ENCODE measurements at regions of chr1 and their contacts with region 1.

Region 1: DNA sequence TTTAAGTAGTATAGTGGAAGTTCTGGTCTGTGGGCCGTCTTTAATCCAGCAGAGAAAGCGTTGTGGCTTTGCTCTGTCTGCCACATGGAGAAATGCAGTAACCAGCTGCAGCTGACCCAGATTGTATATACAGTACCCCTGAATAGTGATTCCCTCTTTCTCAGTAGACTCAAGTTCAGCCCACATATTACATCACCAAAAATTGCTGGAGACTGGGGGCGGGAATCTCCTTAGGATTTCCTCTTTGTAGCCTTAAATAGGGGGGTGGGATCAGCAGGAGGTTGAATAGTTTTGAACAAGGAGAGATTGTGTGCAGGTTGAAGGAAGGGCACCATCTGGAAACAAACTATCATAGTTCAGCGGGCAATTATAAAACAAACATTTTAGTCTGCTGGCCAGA is at the start of gene ANGPTL1:
- DNase-seq: peak in 1 of 2 donors; percentile 12
- ATAC-seq: peak in 6 of 8 donors; percentile 34 to 62 (median 48)
- H3K4me3 ChIP-seq: peak within 1 kb of the TSS in 9 of 10 donors; percentile 12 to 50 (median 42)
- H3K27ac ChIP-seq: peak within 1 kb of the TSS in 7 of 10 donors; percentile 6 to 62 (median 35)
- H3K4me1 ChIP-seq: peaks cover 0 to 41% (median 16%) of the 10 kb centered on the region in 9 donors
- H3K27me3 ChIP-seq: no peaks in the 10 kb centered on the region
- CTCF ChIP-seq: no peak
- total RNA-seq, gene ANGPTL1: 6.9 to 35.2 (median 13.5) TPM

Region 2: GRCh38 chr1:178566187-178566586 is 304.8 kb before region 1 on chr1:
- intact Hi-C with region 1: no loop called
- DNase-seq: no peak
- ATAC-seq: no peak
- H3K4me3 ChIP-seq: no peak overlapping the region
- H3K27ac ChIP-seq: no peak overlapping the region
- H3K4me1 ChIP-seq: peaks cover 0 to 20% (median 0%) of the 10 kb centered on the region in 9 donors
- H3K27me3 ChIP-seq: no peaks in the 10 kb centered on the region
- CTCF ChIP-seq: no peak

Region 3: GRCh38 chr1:178931858-178932551 is 61.1 kb after region 1 on chr1:
- intact Hi-C with region 1: loop called in 5 of 10 experiments (anchors 5 to 10 kb)
- DNase-seq: peak; percentile 66 to 81
- ATAC-seq: peak; percentile 62 to 94 (median 84)
- H3K4me3 ChIP-seq: no peak overlapping the region
- H3K27ac ChIP-seq: peak overlapping the region; percentile 60 to 88 (median 78)
- H3K4me1 ChIP-seq: peaks cover 8 to 55% (median 41%) of the 10 kb centered on the region in 9 donors
- H3K27me3 ChIP-seq: no peaks in the 10 kb centered on the region
- CTCF ChIP-seq: no peak

Region 4: DNA sequence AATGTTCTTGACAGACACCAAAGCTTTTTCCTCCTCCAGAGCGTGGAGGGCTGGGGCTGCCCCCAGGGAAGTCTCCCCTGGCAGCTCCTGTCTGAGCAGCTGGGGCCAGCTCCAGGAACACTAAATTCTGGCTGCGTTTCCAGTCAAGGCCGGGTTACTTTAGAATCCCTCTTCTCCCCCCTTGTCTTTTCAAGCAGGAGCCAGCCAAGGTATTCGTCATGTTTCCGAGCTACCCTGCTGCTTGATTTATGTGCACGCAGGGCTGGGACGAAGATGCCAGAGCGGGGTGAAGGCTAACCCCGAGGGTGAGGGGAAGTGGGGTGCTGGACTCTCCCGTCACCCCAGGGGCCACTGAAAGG is 68.0 kb after region 1 on chr1:
- intact Hi-C with region 1: loop called in 5 of 10 experiments (anchors 5 to 10 kb)
- DNase-seq: peak; percentile 78 to 79
- ATAC-seq: peak; percentile 75 to 93 (median 89)
- H3K4me3 ChIP-seq: peak overlapping the region in 5 of 10 donors; percentile 12 to 28 (median 18)
- H3K27ac ChIP-seq: peak overlapping the region; percentile 68 to 89 (median 83)
- H3K4me1 ChIP-seq: peaks cover 11 to 63% (median 36%) of the 10 kb centered on the region in 9 donors
- H3K27me3 ChIP-seq: no peaks in the 10 kb centered on the region
- CTCF ChIP-seq: no peak